GM10248 (cell line): ENCODE measurements at regions of chr7 and their contacts with region 1.

Region 1: GRCh38 chr7:141654551-141654950 is 47.4 kb downstream of the DENND11 start:
- DNase-seq: peak; percentile 62
- CTCF ChIP-seq: peak; percentile 80

Region 2: GRCh38 chr7:140972876-140973859 is 681.4 kb before region 1 on chr7:
- CTCF ChIA-PET with region 1: no interaction called
- POLR2A ChIA-PET with region 1: no interaction called
- DNase-seq: no peak
- CTCF ChIP-seq: no peak

Region 3: DNA sequence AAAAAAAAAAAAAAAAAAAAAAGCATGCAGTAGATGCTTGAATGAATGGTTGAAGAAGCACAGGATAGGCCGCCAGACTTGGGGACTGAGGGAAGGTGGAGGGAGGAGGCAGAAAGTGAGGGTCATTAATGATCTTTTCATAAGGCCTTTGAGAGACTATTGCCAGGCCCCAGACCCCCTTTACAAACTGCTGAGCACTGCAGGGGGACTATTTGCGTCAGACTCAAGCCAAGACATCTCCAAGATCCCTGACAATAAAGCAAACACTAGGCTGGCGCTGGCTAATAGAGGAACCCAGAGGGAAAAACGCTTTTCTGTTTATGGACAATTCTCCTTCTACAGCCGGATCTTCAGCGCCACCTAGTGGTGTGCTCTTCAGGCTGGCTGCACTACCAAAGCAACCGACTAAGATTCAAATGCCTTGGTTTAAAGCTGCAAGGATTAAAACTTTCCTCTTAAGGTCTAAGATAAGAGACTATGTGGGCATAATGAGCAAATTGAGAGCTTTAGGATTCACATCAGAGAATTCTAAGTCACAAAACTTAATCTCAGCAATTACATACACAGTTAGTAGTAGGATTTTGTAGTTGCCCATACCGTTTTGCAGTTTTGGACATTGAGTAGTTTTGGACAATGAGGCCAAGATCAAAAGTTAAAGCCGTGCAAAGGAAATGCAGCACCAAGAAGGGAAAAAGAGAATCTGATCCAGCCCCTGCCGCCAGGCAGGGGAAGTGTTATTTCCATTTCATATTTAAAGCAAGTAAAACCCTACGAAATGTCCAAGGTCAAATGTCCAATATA is 121.2 kb before region 1 on chr7:
- CTCF ChIA-PET with region 1: interaction called, 11 read pairs
- POLR2A ChIA-PET with region 1: no interaction called
- DNase-seq: peak; percentile 69
- CTCF ChIP-seq: peak; percentile 98

Region 4: GRCh38 chr7:141641876-141642275 is 12.7 kb before region 1 on chr7:
- CTCF ChIA-PET with region 1: interaction called, 19 read pairs
- POLR2A ChIA-PET with region 1: no interaction called
- DNase-seq: no peak
- CTCF ChIP-seq: no peak

Region 5: GRCh38 chr7:141674702-141675101 is 20.2 kb after region 1 on chr7:
- CTCF ChIA-PET with region 1: interaction called, 23 read pairs
- POLR2A ChIA-PET with region 1: no interaction called
- DNase-seq: no peak
- CTCF ChIP-seq: peak; percentile 7

Region 6: GRCh38 chr7:141737834-141738591 is 83.5 kb after region 1 on chr7 and contains the start of gene SSBP1:
- CTCF ChIA-PET with region 1: interaction called, 29 read pairs
- POLR2A ChIA-PET with region 1: no interaction called
- DNase-seq: peak; percentile 86
- CTCF ChIP-seq: peak; percentile 77